Endothelial cell of umbilical vein (primary cell): ENCODE measurements at regions of chr13 and their contacts with region 1.

Region 1: GRCh38 chr13:76903544-76904162 is 17.4 kb upstream of the KCTD12 start:
- DNase-seq: peak; percentile 89
- H3K4me3 ChIP-seq: no peak overlapping the region
- H3K27ac ChIP-seq: no peak overlapping the region
- H3K4me1 ChIP-seq: peaks cover 5% of the 10 kb centered on the region
- H3K27me3 ChIP-seq: peaks cover 3 to 12% of the 10 kb centered on the region in 2 experiments
- CTCF ChIP-seq: peak; percentile 93 to 97
- POLR2A ChIP-seq: no peak

Region 2: DNA sequence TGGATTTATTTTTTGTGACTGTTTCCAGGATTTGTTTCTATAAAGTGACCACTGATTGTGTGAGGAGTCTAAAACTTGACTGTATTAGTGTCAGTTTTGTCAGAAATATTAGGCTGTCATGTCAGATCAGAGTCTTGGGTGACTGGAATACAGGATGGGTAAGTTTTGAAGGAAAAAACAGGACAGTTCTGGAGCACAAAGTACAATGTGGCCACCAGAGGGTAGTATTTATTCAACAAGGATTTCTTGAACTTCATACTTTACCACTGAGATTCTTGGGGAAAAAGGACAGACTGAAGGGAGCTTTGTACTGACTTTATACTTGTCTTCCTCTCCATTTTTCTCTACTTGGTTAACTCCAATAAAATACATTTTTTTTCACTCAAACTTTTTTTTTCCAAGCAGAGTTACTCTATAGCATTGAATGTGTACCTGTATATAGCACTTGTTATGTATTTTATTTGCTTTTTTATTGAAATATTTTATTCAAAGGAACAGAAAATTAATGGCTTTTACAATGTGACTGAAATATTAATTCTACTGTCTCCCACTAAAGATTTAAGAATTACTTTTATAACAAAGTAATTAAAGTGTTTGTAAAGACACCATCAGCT is 1216.4 kb before region 1 on chr13:
- CTCF ChIA-PET with region 1: interaction called, 7 read pairs
- POLR2A ChIA-PET with region 1: no interaction called
- dilution Hi-C with region 1: no loop called
- intact Hi-C with region 1: loop called (anchors 2 kb)
- DNase-seq: peak; percentile 41
- H3K4me3 ChIP-seq: no peak overlapping the region
- H3K27ac ChIP-seq: no peak overlapping the region
- H3K4me1 ChIP-seq: no peaks in the 10 kb centered on the region
- H3K27me3 ChIP-seq: no peaks in the 10 kb centered on the region
- CTCF ChIP-seq: peak; percentile 35 to 50
- POLR2A ChIP-seq: no peak

Region 3: DNA sequence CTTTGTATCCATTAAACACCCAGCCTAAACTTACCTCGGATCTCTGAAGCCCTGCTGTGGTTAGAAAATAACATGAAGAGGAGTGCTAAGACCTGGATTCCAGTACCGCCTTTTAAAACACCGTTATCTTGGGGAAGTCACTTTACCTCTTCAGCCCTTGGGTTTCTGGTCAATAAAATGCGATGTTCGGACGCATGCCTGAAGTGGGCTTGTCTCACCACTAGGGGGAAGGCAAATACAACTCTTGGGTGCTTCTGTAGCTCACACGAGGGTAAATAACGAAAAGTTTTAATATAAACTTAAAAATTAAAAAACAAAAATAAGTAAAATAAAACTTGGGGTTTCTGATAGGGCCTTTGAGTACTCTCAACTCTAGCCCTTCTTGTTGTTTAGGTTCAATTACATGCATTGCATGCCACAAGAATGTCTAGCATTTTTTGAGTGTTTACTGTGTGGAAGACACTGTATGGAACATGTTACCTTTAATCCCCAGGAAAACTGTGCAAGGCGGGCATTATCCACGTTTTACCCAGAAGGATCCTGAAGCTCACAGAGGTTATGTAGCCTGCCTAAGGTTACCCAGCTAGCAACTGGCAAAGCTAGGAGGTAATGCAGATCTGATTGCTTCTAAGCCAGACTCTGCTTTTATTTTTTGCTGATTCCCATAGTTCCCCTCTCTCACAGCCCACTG is 1027.1 kb before region 1 on chr13:
- CTCF ChIA-PET with region 1: interaction called, 73 read pairs
- POLR2A ChIA-PET with region 1: no interaction called
- dilution Hi-C with region 1: no loop called
- intact Hi-C with region 1: loop called (anchors 1 kb)
- DNase-seq: peak; percentile 74
- H3K4me3 ChIP-seq: no peak overlapping the region
- H3K27ac ChIP-seq: no peak overlapping the region
- H3K4me1 ChIP-seq: no peaks in the 10 kb centered on the region
- H3K27me3 ChIP-seq: peaks cover 0 to 2% of the 10 kb centered on the region in 2 experiments
- CTCF ChIP-seq: peak; percentile 76 to 78
- POLR2A ChIP-seq: no peak

Region 4: DNA sequence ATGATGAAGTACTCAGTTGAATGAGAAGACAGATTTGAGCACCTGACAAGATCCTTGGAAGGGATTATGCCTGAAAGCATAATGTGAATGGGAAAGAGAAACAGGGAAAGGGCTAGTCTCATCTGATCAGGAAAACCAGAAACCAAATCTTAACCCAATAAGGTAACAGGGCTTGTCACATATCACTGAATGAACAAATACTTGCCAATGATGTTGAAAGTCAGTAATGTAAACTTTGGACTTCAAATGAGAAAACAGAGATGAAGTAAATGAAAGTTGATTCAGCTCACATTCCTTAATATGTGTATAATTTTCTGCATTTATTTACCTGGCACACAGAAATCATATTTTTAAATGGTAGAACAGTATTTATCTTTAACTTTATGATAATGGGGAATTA is 497.4 kb before region 1 on chr13:
- CTCF ChIA-PET with region 1: no interaction called
- POLR2A ChIA-PET with region 1: no interaction called
- dilution Hi-C with region 1: no loop called
- intact Hi-C with region 1: loop called (anchors 10 kb)
- DNase-seq: no peak
- H3K4me3 ChIP-seq: no peak overlapping the region
- H3K27ac ChIP-seq: no peak overlapping the region
- H3K4me1 ChIP-seq: no peaks in the 10 kb centered on the region
- H3K27me3 ChIP-seq: no peaks in the 10 kb centered on the region
- CTCF ChIP-seq: no peak
- POLR2A ChIP-seq: no peak

Region 5: DNA sequence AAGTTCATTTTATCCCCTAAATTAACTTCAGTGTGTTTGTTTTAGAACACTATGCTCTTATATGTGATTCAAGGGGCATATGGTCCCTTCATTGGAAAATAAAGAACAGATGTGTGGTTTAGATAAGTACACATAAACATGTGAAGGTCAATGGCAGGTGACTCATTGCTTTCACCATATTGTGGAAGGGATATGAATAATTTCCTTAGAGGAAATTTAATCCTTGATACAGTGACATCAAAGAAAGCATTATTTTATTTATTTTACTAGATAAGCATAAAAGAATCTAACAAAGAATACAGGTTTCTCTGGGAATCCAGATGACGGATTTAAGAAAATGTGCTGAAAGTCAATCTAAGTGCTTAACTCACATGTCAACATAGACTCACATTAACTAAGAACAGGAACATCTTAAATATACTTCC is 390.9 kb before region 1 on chr13:
- CTCF ChIA-PET with region 1: interaction called, 4 read pairs
- POLR2A ChIA-PET with region 1: no interaction called
- dilution Hi-C with region 1: no loop called
- intact Hi-C with region 1: loop called (anchors 1 kb)
- DNase-seq: peak; percentile 98
- H3K4me3 ChIP-seq: no peak overlapping the region
- H3K27ac ChIP-seq: peak overlapping the region; percentile 89
- H3K4me1 ChIP-seq: peaks cover 49% of the 10 kb centered on the region
- H3K27me3 ChIP-seq: no peaks in the 10 kb centered on the region
- CTCF ChIP-seq: no peak
- POLR2A ChIP-seq: peak; percentile 90

Region 6: GRCh38 chr13:76822698-76823267 is 80.9 kb before region 1 on chr13:
- CTCF ChIA-PET with region 1: interaction called, 29 read pairs
- POLR2A ChIA-PET with region 1: no interaction called
- dilution Hi-C with region 1: no loop called
- intact Hi-C with region 1: loop called (anchors 1 kb)
- DNase-seq: peak; percentile 71
- H3K4me3 ChIP-seq: no peak overlapping the region
- H3K27ac ChIP-seq: no peak overlapping the region
- H3K4me1 ChIP-seq: no peaks in the 10 kb centered on the region
- H3K27me3 ChIP-seq: no peaks in the 10 kb centered on the region
- CTCF ChIP-seq: peak in 1 of 2 donors; percentile 8
- POLR2A ChIP-seq: no peak